Activated naive CD4-positive, alpha-beta T cell treated with anti-CD3 and anti-CD28 coated beads for 36 hours (primary cell): ENCODE measurements at regions of chr9 and their contacts with region 1.

Region 1: GRCh38 chr9:123338710-123339665 is 17.0 kb upstream of the CRB2 start:
- DNase-seq: peak; percentile 82
- H3K4me3 Mint-ChIP-seq: peak overlapping the region; percentile 77
- H3K27ac Mint-ChIP-seq: peak overlapping the region; percentile 97
- H3K4me1 Mint-ChIP-seq: peaks cover 35% of the 10 kb centered on the region
- H3K27me3 Mint-ChIP-seq: no peaks in the 10 kb centered on the region

Region 2: DNA sequence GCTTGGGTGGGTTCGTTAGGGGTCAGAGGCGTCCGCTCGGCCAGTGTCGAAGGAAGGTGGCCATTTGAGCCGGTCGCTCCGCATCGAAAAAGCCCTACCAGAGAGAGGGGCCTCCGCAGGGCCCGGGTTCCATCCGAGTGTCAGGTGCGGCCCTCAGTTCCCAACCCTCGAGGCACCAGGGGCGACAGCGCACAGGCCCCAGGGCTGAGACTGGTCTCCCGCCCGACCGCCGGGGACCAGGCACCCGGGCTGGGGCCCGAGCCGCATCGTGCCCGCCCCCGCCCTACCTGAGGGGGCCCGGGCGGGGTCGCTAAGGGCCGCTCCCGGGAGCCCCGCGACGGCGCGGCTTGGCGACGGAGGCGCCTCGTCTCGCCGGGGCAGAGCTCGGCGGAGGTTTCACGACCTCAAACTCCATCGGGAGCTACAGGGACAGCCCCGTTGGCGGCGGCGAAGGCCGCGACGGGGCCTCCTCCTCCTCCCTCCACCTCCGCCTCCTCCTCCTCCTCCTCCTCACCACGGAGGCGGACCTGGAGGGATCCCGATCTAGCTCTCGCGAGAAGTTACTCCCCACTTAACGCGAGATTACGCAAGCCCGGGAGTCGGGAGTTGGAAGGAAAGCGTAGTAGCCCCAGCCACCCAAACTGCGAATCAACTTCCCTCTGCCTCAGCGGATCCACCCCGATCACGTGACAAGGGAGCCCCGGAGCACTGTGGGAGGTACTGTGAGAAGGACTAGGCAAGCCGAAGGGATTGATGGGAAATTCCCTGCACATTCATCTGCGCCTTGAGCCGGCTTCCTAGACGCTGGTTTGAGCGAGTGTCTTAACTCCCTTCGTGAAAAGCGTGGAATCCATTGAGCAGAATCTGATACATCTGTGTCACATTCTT is 433.9 kb before region 1 on chr9 and contains the start of gene RC3H2:
- CTCF ChIA-PET with region 1: no interaction called
- intact Hi-C with region 1: loop called (anchors 5 kb)
- DNase-seq: peak; percentile 99
- H3K4me3 Mint-ChIP-seq: peak within 1 kb of the TSS; percentile 89
- H3K27ac Mint-ChIP-seq: peak within 1 kb of the TSS; percentile 94
- H3K4me1 Mint-ChIP-seq: peaks cover 18% of the 10 kb centered on the region
- H3K27me3 Mint-ChIP-seq: no peaks in the 10 kb centered on the region
- total RNA-seq, gene RC3H2: 20.2 to 21.3 TPM

Region 3: DNA sequence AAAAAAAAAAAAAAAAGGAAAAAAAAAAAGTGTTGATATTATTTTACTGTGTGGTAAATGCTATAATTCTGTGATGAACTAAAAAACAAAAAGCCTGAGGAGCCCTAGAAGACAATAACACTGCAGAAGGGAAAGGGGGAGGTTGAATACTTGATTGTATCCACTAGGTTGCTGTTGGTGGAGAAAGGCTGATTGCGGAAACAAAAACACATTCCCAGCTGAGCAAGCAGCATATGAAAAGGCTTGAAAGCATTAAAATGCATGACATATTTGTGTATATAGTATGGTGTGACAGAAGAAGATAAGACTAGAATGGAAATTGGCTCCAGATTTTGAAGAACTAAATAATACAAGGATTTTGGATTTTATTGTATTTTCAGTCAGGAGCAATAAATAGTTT is 389.3 kb before region 1 on chr9:
- CTCF ChIA-PET with region 1: no interaction called
- intact Hi-C with region 1: loop called (anchors 2 kb)
- DNase-seq: no peak
- H3K4me3 Mint-ChIP-seq: no peak overlapping the region
- H3K27ac Mint-ChIP-seq: no peak overlapping the region
- H3K4me1 Mint-ChIP-seq: peaks cover 45% of the 10 kb centered on the region
- H3K27me3 Mint-ChIP-seq: no peaks in the 10 kb centered on the region

Region 4: GRCh38 chr9:123268240-123268949 is 70.6 kb before region 1 on chr9 and contains the start of gene STRBP:
- CTCF ChIA-PET with region 1: interaction called, 3 read pairs
- intact Hi-C with region 1: loop called (anchors 1 kb)
- DNase-seq: peak; percentile 90
- H3K4me3 Mint-ChIP-seq: peak within 1 kb of the TSS; percentile 74
- H3K27ac Mint-ChIP-seq: no peak within 1 kb of the TSS
- H3K4me1 Mint-ChIP-seq: peaks cover 28% of the 10 kb centered on the region
- H3K27me3 Mint-ChIP-seq: no peaks in the 10 kb centered on the region
- total RNA-seq, gene STRBP: 27.6 to 27.8 TPM

Region 5: DNA sequence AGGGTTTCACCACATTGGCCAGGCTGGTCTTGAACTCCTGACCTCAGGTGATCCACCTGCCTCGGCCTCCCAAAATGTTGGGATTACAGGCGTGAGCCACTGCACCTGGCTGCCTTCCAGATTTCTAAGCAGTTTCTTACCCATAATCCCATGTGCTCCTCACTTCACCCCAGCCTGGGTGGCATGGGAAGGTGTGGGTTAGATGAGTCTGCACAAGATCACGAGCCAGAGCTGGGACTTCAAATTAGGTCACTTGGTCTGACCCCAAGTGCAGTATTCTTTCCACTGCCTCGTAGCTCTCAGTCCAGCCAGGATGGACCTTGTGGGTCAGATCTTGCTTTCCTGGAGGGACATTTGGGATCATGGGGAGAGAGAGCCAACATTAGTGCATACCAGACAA is 33.1 kb before region 1 on chr9:
- CTCF ChIA-PET with region 1: no interaction called
- intact Hi-C with region 1: loop called (anchors 1 kb)
- DNase-seq: no peak
- H3K4me3 Mint-ChIP-seq: no peak overlapping the region
- H3K27ac Mint-ChIP-seq: no peak overlapping the region
- H3K4me1 Mint-ChIP-seq: peaks cover 40% of the 10 kb centered on the region
- H3K27me3 Mint-ChIP-seq: no peaks in the 10 kb centered on the region

Region 6: DNA sequence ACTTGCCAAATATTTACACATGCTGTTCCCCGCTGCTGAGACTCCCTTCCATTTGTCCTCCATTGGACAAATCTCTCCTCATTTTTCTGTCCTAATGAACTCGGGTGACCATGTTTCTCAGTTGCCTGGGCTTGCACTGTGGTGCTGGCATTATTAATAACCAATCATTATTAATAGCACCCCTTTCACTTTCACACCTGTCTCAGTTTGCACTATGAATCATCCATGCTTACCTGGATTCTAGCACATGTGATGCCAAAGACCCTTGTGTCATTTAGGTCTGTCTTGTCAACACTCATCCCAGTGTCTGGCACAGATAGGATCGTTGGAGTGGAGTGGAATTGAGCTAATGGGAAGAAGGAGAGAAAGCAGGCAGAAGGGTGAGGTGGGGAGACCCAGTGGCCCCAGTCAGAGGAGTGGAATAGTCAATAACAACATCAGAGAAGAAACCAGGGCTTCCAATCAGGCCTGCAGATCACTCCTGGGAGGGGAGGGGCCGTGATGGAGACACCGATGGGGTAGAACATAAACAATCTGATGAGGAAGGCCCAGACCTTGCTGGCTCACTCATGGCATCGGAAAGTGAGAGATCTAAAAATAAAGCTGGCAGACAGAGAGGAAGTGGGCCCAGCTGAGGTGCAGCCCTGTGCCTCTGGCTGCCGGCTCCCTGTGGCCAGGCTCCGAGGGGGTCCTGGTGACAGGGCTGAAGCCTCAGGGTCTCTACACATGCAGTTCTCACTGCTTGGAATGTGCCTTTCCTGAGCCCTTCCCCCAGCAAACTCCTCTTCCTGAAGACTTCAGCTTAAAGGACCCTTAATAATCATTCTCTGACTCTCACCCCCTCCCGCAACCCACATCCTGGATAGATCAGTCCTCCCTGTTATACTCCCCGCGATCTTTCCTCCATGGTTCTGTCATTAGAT is 16.5 kb before region 1 on chr9:
- CTCF ChIA-PET with region 1: interaction called, 5 read pairs
- intact Hi-C with region 1: loop called (anchors 1 kb)
- DNase-seq: peak; percentile 84
- H3K4me3 Mint-ChIP-seq: peak overlapping the region; percentile 25
- H3K27ac Mint-ChIP-seq: peak overlapping the region; percentile 80
- H3K4me1 Mint-ChIP-seq: peaks cover 31% of the 10 kb centered on the region
- H3K27me3 Mint-ChIP-seq: no peaks in the 10 kb centered on the region